Thyroid gland (tissue), 4 donors: ENCODE measurements at regions of chrX and their contacts with region 1.

Region 1: DNA sequence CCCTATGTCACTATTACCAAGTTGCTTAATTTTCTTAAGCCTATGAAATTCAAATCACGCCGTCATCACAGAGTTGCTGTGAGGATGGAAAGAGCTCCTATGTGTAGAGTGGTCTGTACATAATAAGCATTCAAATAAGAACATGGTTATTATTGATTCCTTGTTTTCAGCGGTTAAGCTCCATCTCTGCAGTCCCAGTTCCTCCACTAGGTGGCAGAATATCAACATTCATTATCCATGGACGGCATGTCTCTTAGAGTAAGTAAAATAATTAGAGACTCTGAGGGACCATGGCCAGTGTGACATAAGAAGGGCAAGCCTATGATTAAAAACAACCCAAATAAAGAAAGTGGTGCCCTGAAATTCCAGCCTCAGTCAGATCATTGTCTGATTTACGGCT is 132.5 kb upstream of the NHS start:
- DNase-seq: peak; percentile 34 to 38
- H3K4me3 ChIP-seq: no peak overlapping the region
- H3K27ac ChIP-seq: no peak overlapping the region
- H3K4me1 ChIP-seq: no peaks in the 10 kb centered on the region
- H3K27me3 ChIP-seq: no peaks in the 10 kb centered on the region
- CTCF ChIP-seq: peak; percentile 38 to 79 (median 60)
- POLR2A ChIP-seq: no peak

Region 2: DNA sequence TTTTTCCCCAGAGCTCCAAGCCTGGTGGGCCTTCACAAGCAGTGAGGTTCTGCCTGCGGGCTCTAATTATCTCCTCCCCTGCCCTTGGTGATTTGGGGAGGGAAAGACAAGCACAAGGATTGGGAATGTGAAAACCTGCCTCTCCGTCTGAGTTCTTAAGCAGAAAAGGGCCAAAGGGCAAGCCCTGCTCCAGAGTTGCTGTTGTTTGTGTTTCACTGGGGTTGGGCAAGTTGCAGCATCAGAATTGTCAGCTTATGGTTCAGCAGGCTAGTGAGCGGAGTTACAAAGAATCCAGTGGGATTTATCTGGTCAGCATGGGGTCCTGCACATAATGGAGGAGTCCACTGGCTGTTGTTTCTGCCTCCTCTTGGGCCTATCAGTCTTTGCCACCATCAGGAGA is 193.0 kb after region 1 on chrX:
- intact Hi-C with region 1: no loop called
- DNase-seq: no peak
- H3K4me3 ChIP-seq: no peak overlapping the region
- H3K27ac ChIP-seq: no peak overlapping the region
- H3K4me1 ChIP-seq: no peaks in the 10 kb centered on the region
- H3K27me3 ChIP-seq: no peaks in the 10 kb centered on the region
- CTCF ChIP-seq: no peak
- POLR2A ChIP-seq: no peak

Region 3: DNA sequence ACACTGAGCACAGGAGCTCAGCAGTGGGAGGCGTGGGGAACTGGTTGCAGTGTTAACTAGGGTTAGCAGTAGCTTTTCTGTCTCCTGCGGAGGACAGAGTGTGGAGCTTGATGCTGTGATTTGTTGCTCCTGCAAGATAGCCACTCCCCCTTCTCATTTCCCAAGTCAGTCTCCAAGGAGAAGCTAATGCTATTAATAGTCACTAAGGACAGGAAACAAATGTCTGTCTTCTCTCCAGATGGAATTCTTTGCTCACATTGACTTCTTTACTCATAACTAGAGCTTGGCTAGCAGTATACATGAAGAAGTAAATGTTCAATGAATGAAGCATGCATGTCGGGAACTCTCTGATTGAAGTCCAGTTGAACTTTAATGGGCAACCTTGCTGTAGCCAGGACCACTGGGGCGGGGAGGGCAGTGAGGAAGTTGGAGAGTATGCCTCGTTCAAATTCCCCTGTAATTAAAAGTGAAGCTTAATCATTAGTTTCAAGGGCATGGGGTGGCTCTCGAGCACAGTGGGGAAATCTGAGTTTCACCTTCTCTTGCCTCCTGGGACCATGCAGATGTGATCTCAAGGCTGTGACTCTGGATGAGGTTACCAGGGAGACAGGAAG is 338.2 kb after region 1 on chrX:
- intact Hi-C with region 1: loop called (anchors 10 kb)
- DNase-seq: no peak
- H3K4me3 ChIP-seq: no peak overlapping the region
- H3K27ac ChIP-seq: no peak overlapping the region
- H3K4me1 ChIP-seq: no peaks in the 10 kb centered on the region
- H3K27me3 ChIP-seq: no peaks in the 10 kb centered on the region
- CTCF ChIP-seq: no peak
- POLR2A ChIP-seq: no peak

Region 4: GRCh38 chrX:17689971-17690409 is 447.5 kb after region 1 on chrX:
- intact Hi-C with region 1: loop called (anchors 5 kb)
- DNase-seq: peak; percentile 33 to 34
- H3K4me3 ChIP-seq: no peak overlapping the region
- H3K27ac ChIP-seq: no peak overlapping the region
- H3K4me1 ChIP-seq: no peaks in the 10 kb centered on the region
- H3K27me3 ChIP-seq: no peaks in the 10 kb centered on the region
- CTCF ChIP-seq: peak; percentile 31 to 70 (median 55)
- POLR2A ChIP-seq: no peak